ENCODE measurements at regions of chr7 and their contacts with region 1.

Region 1: GRCh38 chr7:23247603-23248335 is 1.2 kb downstream of the GPNMB start:
- DNase-seq: peak; percentile 63
- H3K4me3 ChIP-seq: peak overlapping the region; percentile 73
- H3K27ac ChIP-seq: peak overlapping the region; percentile 78
- H3K4me1 ChIP-seq: peaks cover 32% of the 10 kb centered on the region
- H3K27me3 ChIP-seq: no peaks in the 10 kb centered on the region

Region 2: DNA sequence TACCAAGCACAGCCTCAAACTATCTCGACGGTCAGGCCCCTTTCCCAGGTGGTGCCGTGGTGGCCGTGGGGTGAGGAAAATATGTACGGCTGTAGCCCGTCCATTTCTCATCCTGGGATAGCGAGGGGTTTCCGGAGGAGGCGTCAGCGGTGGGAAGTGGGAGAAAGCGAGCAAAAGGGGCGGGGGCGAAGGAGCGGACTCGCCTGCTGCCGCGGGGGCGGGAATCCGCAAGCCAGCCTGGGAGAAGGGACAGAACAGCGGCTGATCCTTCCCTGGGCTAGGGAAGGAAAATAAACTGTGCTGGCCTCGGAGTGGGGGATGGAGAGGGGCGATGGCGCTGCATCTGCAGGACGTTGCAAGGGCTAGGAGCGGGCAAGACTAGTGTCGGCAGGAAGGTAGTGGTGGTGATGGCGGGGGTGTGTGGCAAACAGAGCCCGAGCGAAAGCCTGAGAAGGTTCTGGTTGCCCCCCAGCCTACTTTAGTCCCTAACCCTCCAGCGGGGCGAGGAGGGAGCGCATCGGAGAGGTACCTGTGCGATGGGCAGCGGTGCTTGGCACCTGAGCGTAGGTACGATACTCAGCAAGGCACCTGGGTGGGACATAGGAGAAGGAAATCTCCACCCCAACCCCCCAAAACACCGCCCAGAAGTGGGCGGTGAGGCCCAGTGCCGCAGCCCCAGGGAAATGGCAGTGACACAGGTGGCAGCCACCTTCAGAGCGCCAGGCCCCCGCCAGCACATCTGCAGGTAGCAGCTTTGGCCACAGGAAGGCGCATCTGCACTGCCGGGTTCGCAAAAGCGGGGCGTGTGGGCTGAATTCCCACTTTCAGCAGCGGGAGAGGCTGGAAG is 697.9 kb before region 1 on chr7:
- in situ Hi-C with region 1: loop called (anchors 25 kb)
- DNase-seq: peak; percentile 59
- H3K4me3 ChIP-seq: peak overlapping the region; percentile 66
- H3K27ac ChIP-seq: no peak overlapping the region
- H3K4me1 ChIP-seq: no peaks in the 10 kb centered on the region
- H3K27me3 ChIP-seq: peaks cover 42% of the 10 kb centered on the region

Region 3: DNA sequence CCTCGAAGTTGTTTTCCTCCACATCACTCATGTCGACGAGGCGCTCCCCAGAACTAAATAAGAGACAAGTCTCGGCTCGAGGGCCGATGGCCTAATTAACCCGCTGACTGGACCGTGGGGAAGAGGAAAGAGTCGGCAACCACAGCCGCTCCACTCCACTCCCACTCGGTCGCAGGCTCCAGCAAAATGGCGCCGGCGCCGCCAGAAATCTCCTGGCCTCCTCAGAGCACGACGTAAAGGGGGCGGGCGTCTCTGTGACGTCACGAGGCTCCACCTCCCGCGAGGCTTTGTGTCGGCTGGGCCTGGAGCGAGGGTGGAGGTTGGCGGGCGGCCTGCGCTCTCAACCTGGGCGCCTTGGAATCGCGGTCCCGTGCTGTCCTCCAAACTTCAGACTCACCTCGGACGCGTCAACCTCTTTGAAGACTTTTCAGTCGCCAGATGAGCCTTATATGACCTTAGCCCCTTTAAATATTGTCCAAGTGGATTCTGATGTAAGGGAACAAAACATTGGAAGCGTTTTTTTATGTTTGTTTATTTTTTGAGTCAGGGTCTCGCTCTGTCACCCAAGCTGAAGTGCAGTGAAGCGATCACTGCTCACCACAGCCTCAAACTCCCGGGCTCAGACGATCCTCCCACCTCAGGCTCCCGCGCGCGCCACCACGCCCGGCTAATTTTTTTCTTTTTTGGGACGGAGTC is 284.2 kb after region 1 on chr7 and contains the start of gene TRA2A:
- in situ Hi-C with region 1: no loop called
- DNase-seq: peak; percentile 97
- H3K4me3 ChIP-seq: peak within 1 kb of the TSS; percentile 94
- H3K27ac ChIP-seq: peak within 1 kb of the TSS; percentile 98
- H3K4me1 ChIP-seq: peaks cover 34% of the 10 kb centered on the region
- H3K27me3 ChIP-seq: no peaks in the 10 kb centered on the region
- total RNA-seq, gene TRA2A: 14.7 and 26.2 TPM in 2 replicates

Measured in GM23248 (cell line).